Body of pancreas (tissue), 4 donors: ENCODE measurements at regions of chr3 and their contacts with region 1.

Region 1: GRCh38 chr3:50272911-50273693 is 4.2 kb downstream of the SEMA3B start:
- DNase-seq: peak; percentile 86 to 91 (median 90)
- ATAC-seq: peak; percentile 70
- H3K4me3 ChIP-seq: no peak overlapping the region
- H3K27ac ChIP-seq: peak overlapping the region in 3 of 4 donors; percentile 93 to 97 (median 94)
- H3K4me1 ChIP-seq: peaks cover 62% of the 10 kb centered on the region
- H3K27me3 ChIP-seq: no peaks in the 10 kb centered on the region
- CTCF ChIP-seq: peak; percentile 94 to 99 (median 99)
- POLR2A ChIP-seq: peak in 2 of 3 donors; percentile 18 to 24

Region 2: GRCh38 chr3:50230104-50230793 is 42.9 kb before region 1 on chr3:
- intact Hi-C with region 1: loop called (anchors 5 kb)
- DNase-seq: no peak
- ATAC-seq: no peak
- H3K4me3 ChIP-seq: no peak overlapping the region
- H3K27ac ChIP-seq: peak overlapping the region in 3 of 4 donors; percentile 9 to 54 (median 41)
- H3K4me1 ChIP-seq: peaks cover 33% of the 10 kb centered on the region
- H3K27me3 ChIP-seq: no peaks in the 10 kb centered on the region
- CTCF ChIP-seq: no peak
- POLR2A ChIP-seq: no peak

Region 3: GRCh38 chr3:50370594-50370993 is 97.5 kb after region 1 on chr3:
- intact Hi-C with region 1: no loop called
- DNase-seq: no peak
- ATAC-seq: no peak
- H3K4me3 ChIP-seq: no peak overlapping the region
- H3K27ac ChIP-seq: no peak overlapping the region
- H3K4me1 ChIP-seq: peaks cover 19% of the 10 kb centered on the region
- H3K27me3 ChIP-seq: no peaks in the 10 kb centered on the region
- CTCF ChIP-seq: no peak
- POLR2A ChIP-seq: no peak